Heart left ventricle (tissue), 16 donors: ENCODE measurements at regions of chr18 and their contacts with region 1.

Region 1: DNA sequence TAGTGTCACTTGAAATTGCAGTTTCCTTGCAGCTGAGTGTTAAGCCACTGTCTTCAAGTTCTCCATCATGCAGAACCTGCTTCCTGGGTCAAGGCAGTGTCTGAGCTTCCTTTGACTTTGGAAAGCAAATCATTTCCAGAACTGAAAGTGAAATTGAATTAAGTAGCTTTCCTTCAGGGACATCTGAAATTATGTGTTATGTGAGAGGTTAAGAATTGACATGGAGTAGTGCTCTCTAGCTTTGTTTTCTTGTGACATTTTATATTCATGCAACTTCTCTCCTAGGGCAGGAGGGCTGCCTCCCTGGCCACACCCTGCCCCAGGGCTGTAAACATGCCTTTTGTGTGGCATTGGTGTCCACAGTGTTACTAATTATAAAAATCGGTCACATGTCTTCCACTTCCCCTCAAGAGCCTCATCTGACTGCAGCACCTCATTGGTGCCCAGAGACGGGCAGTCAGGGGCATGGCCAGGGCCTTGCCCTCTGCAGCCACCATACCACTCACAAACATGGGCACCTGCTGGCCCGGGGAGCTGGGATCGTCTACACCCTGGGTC is 14.4 kb downstream of the RAB12 start:
- DNase-seq: peak; percentile 56 to 76 (median 68)
- ATAC-seq: peak; percentile 89 to 96 (median 92)
- H3K4me3 ChIP-seq: peak overlapping the region in 9 of 12 donors; percentile 19 to 43 (median 32)
- H3K27ac ChIP-seq: peak overlapping the region; percentile 56 to 87 (median 78)
- H3K4me1 ChIP-seq: peaks cover 2 to 80% (median 52%) of the 10 kb centered on the region in 12 donors
- H3K27me3 ChIP-seq: no peaks in the 10 kb centered on the region
- CTCF ChIP-seq: no peak
- POLR2A ChIP-seq: peak in 1 of 2 donors; percentile 62

Region 2: DNA sequence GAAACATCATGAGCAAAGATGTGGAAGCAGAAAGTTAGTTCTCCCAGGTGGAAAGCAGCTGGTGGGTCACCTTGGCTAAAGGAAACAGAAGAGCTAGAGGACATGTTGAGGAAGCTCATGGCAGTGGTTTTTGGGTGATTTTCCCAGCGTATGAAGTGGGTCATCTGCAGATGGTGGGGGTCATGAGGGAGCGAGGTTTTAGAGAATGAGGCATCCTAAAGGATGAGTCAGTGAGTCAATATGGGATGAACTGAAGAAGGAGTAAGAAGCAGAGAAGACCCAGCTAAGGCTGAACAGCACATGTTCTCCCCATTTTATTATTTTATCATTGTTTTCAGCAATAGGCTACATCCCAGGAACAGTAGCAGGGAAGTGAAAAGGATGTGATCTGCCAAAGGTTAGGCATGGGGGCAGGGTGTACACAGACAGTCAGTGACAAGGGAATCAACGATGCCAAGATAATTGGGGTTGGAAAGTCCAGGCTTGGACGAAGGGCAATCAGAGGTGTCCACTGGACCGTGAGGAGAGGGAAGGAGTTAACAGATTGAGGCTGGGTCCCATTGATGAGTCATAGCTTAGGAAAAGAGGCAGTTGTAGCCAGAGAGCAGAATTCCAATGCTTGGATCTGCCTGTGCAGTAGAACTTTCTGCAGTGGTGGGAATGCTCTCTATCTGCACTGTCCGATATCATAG is 303.7 kb before region 1 on chr18:
- intact Hi-C with region 1: no loop called
- DNase-seq: no peak
- ATAC-seq: peak in 1 of 4 donors; percentile 22
- H3K4me3 ChIP-seq: no peak overlapping the region
- H3K27ac ChIP-seq: no peak overlapping the region
- H3K4me1 ChIP-seq: peaks cover 0 to 7% (median 0%) of the 10 kb centered on the region in 12 donors
- H3K27me3 ChIP-seq: no peaks in the 10 kb centered on the region
- CTCF ChIP-seq: no peak
- POLR2A ChIP-seq: no peak

Region 3: GRCh38 chr18:8559612-8560186 is 63.9 kb before region 1 on chr18:
- intact Hi-C with region 1: loop called in 1 of 10 experiments (anchors 5 kb)
- DNase-seq: no peak
- ATAC-seq: no peak
- H3K4me3 ChIP-seq: no peak overlapping the region
- H3K27ac ChIP-seq: no peak overlapping the region
- H3K4me1 ChIP-seq: peaks cover 0 to 25% (median 9%) of the 10 kb centered on the region in 12 donors
- H3K27me3 ChIP-seq: no peaks in the 10 kb centered on the region
- CTCF ChIP-seq: no peak
- POLR2A ChIP-seq: no peak

Region 4: DNA sequence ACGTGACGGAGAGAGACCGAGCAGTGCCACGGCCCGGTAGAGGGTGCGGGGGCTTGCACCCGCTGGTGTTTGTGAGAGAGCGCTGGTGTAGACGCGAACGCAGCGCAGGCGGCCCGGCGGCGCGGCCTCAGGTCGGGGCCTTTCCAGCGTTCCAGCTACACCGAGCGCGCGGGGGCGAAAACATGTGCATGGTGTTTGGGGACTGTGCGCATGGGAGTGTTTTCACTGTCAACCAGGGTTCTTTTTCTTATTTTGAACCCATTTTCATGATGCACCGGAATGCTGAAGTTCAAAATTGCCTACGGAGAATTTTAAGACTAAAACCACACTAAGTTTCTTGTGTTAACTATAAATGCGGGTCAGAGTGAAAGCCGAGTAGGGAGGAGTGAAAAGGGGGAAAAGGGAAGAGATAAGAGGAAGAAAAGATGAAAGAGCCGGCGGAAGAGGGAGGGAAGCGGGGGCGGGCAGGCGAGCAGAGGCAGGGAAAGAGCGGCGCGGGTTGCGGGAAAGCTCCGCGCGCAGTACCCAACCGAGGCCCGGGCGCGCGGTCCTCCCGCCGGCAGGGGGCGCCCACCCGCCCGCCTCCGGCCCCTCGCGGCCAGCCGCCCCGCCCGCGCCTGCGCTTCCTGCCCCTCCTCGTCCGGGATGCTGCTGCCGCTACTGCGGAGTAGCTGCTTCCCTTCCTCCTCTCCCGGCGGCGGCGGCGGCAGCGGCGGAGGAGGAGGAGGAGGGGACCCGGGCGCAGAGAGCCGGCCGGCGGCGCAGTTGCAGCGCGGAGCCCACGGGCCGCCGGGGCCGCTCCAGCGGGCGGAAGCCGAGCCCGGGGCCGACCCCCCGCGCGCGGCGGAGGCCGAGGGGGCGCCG is 14.6 kb before region 1 on chr18 and contains the start of gene RAB12:
- intact Hi-C with region 1: loop called in 1 of 10 experiments (anchors 1 kb)
- DNase-seq: peak; percentile 91 to 95 (median 92)
- ATAC-seq: peak; percentile 71 to 94 (median 90)
- H3K4me3 ChIP-seq: peak within 1 kb of the TSS; percentile 53 to 97 (median 88)
- H3K27ac ChIP-seq: peak within 1 kb of the TSS; percentile 69 to 89 (median 83)
- H3K4me1 ChIP-seq: peaks cover 6 to 54% (median 37%) of the 10 kb centered on the region in 12 donors
- H3K27me3 ChIP-seq: no peaks in the 10 kb centered on the region
- CTCF ChIP-seq: peak; percentile 28 to 94 (median 72)
- POLR2A ChIP-seq: peak in 1 of 2 donors; percentile 33
- total RNA-seq, gene RAB12: 66.5 to 123 (median 100) TPM

Region 5: DNA sequence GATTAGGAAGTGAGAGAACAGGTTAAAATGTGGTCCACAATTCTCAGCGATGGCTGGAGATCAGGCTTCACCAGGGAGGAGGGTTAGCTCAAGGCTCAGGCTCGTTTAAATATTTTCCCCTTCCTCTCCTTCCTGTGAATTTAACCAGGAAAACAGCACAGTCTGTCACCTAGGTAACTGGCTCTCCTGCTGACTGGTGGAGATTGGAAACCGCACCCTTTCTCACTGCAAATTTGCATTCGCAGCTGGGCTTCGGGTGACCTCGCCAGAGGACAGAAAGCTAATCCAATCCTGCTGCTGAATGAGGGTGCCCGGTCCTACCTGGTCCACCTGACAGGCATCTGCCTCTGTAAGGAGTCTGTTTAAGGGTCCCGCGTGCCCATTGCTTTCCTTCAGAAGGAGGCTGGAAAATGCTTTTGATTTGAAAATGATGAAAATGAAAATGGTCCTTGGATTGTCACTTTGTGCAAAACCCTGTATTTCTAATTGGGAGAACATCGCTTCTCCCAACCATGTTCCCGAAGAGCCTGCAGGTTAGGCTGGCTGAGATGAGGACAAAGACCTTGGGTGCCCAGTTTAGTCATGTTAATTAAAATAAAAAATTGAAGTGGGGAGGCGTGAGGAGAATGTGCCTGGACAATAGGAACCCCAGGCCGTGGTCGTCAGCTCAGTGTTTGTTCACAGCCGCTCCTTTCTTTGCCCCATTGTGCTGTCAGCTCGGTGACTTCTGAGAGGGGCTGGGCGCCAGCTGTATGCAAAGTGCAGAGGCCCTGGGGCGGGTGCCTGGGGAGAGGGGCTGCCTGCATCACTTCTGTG is 38.3 kb after region 1 on chr18:
- intact Hi-C with region 1: no loop called
- DNase-seq: no peak
- ATAC-seq: no peak
- H3K4me3 ChIP-seq: no peak overlapping the region
- H3K27ac ChIP-seq: no peak overlapping the region
- H3K4me1 ChIP-seq: peaks cover 0 to 7% (median 0%) of the 10 kb centered on the region in 12 donors
- H3K27me3 ChIP-seq: peaks cover 0 to 9% (median 3%) of the 10 kb centered on the region in 9 donors
- CTCF ChIP-seq: no peak
- POLR2A ChIP-seq: no peak

Region 6: DNA sequence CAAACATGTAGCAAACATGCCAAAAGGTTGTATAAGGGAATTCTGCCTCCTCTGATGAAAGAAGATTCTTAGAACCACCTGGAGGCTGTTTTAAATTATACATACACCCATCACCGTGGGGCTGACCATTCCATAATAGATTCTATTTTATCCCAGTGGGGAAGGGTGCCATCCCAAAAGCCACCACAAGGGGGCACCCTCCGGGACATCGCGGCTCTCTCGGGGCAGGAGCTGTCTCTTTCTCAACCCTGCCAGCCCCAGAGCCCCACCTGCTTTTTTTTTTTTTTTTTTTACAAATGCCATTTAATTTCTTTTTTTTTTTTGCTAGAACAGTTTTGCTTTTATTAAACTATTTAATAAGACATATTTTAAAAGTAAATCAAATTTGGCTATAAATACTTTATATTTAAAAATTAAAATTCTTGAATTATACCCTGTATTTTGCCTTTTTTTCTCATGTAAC is 73.2 kb after region 1 on chr18:
- intact Hi-C with region 1: loop called in 1 of 10 experiments (anchors 10 kb)
- DNase-seq: peak; percentile 51 to 81 (median 68)
- ATAC-seq: peak in 3 of 4 donors; percentile 85 to 92 (median 91)
- H3K4me3 ChIP-seq: no peak overlapping the region
- H3K27ac ChIP-seq: no peak overlapping the region
- H3K4me1 ChIP-seq: no peaks in the 10 kb centered on the region
- H3K27me3 ChIP-seq: peaks cover 0 to 10% (median 0%) of the 10 kb centered on the region in 9 donors
- CTCF ChIP-seq: peak; percentile 88 to 98 (median 92)
- POLR2A ChIP-seq: no peak